HEK293 (cell line): ENCODE measurements at regions of chr15 and their contacts with region 1.

Region 1: DNA sequence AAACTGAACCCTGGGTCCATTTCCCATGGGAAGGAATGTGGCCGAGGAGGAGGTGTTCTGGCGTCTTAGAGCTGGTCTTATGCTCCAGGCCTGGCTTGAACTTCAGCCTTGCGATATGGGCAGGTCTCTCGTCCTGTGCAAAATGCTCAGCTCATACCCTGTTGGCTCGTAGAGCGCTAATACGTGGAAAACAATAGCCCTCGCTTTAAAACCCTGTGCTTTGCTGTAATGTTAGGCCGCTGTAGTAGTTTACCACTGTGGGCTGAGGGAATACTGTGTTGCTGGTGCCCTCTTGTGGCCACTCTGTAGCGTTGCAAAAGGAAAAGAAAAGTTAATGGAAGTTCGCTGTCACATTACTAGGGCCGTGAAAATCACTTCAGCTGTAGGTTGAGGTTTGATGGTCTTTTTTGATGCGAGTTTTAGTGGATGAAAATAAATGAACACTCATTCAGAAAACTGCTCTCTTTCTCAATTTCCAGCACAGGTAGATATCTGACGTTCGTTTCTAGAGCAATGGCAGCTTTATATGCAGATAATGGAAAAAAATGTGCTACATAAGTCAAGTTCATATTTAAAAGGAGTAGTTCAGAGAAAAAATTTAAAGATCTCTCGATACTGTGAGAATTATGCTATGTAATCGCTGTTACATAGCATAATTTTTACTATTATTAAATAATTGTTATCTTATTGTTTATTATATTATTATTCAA is 92.9 kb downstream of the MCTP2 start:
- H3K4me3 ChIP-seq: no peak overlapping the region
- H3K27ac ChIP-seq: no peak overlapping the region
- H3K4me1 ChIP-seq: no peaks in the 10 kb centered on the region
- CTCF ChIP-seq: peak; percentile 80

Region 2: DNA sequence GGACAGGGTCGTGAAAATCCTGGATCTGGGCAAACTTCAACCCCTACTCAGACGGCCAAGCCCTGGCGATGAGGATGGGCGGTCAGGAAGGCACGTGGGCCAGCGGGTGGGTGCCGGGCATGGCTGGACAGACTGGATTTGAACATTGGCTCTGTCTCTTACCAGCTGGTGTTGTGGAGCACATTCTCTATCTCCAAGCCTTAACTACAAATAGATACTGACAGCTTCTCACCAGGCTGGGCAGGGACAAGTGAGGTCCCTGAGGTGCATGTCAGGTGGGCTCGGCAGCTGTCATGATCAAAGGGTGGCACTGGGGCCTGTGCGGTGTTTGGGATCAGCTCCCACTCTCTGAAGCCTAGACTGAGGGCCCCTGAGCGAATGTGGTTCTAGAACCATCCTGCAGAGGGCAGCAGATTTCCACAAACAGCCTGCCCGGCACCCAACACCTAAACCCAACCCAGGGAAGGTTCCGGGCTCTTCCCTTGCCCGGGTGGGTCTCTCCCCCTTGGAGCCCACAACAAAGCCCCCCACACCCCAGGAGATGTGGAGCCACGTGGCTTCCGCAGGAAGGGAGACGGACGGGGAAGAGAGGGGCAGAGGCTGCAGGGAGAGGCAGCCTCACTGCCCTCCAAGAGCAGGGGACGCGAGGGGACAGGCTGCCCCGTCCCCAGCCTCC is 1293.7 kb before region 1 on chr15:
- CTCF ChIA-PET with region 1: interaction called, 10 read pairs
- POLR2A ChIA-PET with region 1: no interaction called
- H3K4me3 ChIP-seq: no peak overlapping the region
- H3K27ac ChIP-seq: no peak overlapping the region
- H3K4me1 ChIP-seq: no peaks in the 10 kb centered on the region
- CTCF ChIP-seq: peak; percentile 88

Region 3: DNA sequence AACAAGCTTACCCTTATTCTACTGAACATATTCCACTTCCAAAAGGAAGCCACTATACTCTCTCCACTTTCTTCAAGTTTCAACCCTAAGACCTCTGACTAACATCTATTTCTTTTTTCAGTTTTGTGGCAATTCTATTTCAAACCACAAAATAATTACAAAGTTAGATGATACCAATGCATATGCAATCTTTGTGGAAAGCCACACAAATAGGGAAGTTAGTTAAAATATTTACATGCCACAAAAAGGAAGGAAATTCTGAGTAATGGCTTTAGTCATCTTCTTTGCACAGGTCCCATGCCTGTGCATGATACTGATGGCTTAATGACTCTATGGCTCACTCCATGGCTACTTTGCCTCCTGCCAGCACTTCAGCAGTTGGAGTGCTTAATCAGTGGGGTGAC is 149.9 kb before region 1 on chr15:
- CTCF ChIA-PET with region 1: interaction called, 20 read pairs
- POLR2A ChIA-PET with region 1: no interaction called
- H3K4me3 ChIP-seq: no peak overlapping the region
- H3K27ac ChIP-seq: no peak overlapping the region
- H3K4me1 ChIP-seq: no peaks in the 10 kb centered on the region
- CTCF ChIP-seq: no peak

Region 4: DNA sequence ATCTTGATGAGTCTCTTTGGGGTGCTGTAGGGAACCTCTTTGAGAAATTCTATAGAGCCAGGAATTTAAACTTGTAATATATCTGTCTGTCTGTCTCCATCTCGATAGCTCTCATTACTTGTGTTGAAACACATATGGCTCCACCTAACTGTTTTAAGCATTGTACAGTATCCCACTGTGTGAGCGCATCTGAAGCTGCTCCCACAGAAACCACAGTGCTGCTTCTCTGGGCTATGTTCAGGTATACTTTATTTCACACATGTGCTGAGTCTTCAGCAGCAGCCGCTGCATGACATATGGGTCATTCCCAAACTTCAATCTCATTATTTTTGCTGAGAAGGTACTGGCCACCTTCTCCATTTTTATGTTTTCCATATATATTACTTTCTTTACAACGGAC is 29.0 kb before region 1 on chr15:
- CTCF ChIA-PET with region 1: no interaction called
- POLR2A ChIA-PET with region 1: no interaction called
- H3K4me3 ChIP-seq: no peak overlapping the region
- H3K27ac ChIP-seq: no peak overlapping the region
- H3K4me1 ChIP-seq: no peaks in the 10 kb centered on the region
- CTCF ChIP-seq: no peak

Region 5: GRCh38 chr15:94306700-94307650 is 17.3 kb before region 1 on chr15:
- CTCF ChIA-PET with region 1: interaction called, 39 read pairs
- POLR2A ChIA-PET with region 1: no interaction called
- H3K4me3 ChIP-seq: no peak overlapping the region
- H3K27ac ChIP-seq: no peak overlapping the region
- H3K4me1 ChIP-seq: no peaks in the 10 kb centered on the region
- CTCF ChIP-seq: no peak

Region 6: DNA sequence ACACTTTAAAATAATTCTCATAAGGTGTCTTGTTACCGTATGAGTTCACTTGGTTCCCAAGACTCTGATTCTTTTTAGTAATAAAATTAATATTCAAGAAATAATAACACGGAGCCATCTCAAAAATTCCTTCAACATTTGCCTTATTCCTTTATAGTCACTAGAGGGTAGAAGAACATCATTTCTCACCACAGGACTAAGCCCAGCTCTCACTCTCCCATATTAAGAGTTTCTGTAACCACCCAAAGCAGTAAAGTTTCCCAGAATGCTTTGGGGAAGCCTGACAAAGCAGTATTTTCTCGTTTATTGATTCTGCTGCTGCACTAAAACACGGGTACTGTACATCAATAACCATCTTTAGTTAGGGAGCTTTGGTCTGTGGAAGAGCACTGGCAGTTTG is 22.0 kb after region 1 on chr15:
- CTCF ChIA-PET with region 1: interaction called, 18 read pairs
- POLR2A ChIA-PET with region 1: interaction called, 5 read pairs
- H3K4me3 ChIP-seq: no peak overlapping the region
- H3K27ac ChIP-seq: no peak overlapping the region
- H3K4me1 ChIP-seq: no peaks in the 10 kb centered on the region
- CTCF ChIP-seq: no peak